Ascending aorta (tissue), 2 donors: ENCODE measurements at regions of chr10 and their contacts with region 1.

Region 1: GRCh38 chr10:25059764-25060389 is 43.5 kb downstream of the THNSL1 start:
- DNase-seq: peak; percentile 47 to 91
- H3K4me3 ChIP-seq: no peak overlapping the region
- H3K27ac ChIP-seq: peak overlapping the region; percentile 7 to 43
- H3K4me1 ChIP-seq: peaks cover 2 to 28% of the 10 kb centered on the region in 2 donors
- H3K27me3 ChIP-seq: no peaks in the 10 kb centered on the region
- CTCF ChIP-seq: no peak

Region 2: GRCh38 chr10:24541239-24542048 is 518.4 kb before region 1 on chr10:
- intact Hi-C with region 1: no loop called
- DNase-seq: no peak
- H3K4me3 ChIP-seq: no peak overlapping the region
- H3K27ac ChIP-seq: no peak overlapping the region
- H3K4me1 ChIP-seq: no peaks in the 10 kb centered on the region
- H3K27me3 ChIP-seq: no peaks in the 10 kb centered on the region
- CTCF ChIP-seq: no peak

Region 3: DNA sequence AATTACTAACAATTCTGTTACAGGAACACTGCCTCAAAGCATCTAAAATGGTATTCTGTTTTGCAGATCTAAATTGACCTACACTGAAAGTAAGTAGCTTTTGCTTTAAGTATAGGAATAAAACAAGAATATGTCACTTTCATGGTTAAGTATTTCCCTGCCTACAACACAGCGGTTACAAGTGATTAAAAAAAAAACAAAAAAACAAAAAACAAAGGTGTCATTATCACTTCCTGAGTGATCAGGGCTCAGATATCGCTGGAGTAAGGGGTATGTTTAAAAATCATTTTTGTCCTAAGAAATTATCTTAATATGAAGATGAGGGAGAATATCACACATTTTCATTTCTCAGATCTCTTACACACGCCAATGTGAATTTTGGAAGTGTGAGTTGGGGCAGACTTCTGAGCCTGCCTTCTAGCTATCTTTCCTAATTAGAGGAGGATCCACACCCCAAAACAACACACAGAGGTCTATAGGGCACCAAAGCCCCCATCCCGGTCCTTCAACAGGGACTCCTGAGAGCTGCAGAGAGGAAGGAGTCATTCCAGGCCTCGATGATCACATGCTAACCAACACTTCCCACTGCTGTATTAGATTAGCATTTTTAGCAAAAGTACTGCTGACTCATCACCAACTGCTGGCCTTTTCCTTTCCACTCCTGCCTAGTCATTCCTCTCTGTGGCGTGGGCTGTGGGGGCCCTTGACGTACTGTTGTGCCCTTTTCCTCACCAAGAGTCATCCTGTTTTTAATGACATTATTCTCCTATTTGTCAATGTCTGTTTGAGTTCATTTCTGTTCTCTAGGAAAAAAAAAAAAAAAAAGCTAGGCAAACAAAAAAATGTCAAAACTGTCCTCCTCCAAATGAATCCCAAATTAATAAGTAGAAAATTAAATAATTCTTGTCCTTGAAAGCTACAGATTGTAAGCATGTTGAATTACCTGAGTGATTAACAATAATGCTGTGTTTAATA is 138.7 kb before region 1 on chr10:
- intact Hi-C with region 1: no loop called
- DNase-seq: peak; percentile 36 to 83
- H3K4me3 ChIP-seq: no peak overlapping the region
- H3K27ac ChIP-seq: no peak overlapping the region
- H3K4me1 ChIP-seq: peaks cover 0 to 5% of the 10 kb centered on the region in 2 donors
- H3K27me3 ChIP-seq: no peaks in the 10 kb centered on the region
- CTCF ChIP-seq: no peak

Region 4: DNA sequence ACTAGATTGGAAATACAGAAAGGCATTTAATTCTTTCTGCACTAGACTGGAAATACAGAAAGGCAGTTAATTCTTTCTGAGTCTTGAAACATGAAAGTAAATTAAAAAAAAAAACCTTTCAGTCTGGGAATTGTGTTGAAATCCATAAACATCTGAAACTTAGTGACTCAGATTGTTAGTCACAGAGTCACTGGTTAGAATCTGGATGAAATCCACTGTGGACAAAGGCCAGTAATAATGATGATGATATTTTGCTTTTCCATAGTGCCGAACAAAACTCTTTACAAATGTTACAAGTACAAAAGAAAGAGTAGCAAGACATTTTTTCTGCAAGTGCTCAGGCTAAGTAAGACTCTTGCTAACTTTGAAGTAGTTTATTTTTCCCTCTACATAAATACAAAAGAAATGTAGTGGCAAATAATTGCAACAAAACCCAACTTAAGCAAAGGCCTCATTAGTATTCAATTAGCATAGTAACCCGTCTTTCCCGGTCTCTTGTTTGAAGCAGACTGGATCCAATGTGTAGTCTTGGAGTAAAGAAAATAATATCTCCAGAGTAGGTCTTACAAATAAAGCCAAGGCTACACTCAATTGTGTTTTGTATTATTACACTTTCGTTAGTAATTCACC is 101.7 kb before region 1 on chr10:
- intact Hi-C with region 1: loop called (anchors 5 kb)
- DNase-seq: no peak
- H3K4me3 ChIP-seq: peak overlapping the region; percentile 20 to 29
- H3K27ac ChIP-seq: peak overlapping the region; percentile 64 to 65
- H3K4me1 ChIP-seq: peaks cover 0 to 13% of the 10 kb centered on the region in 2 donors
- H3K27me3 ChIP-seq: no peaks in the 10 kb centered on the region
- CTCF ChIP-seq: no peak